Breast epithelium (tissue), 4 donors: ENCODE measurements at regions of chr17 and their contacts with region 1.

Region 1: GRCh38 chr17:19377602-19378392 is 501 bp upstream of the MAPK7 start:
- DNase-seq: peak; percentile 98
- H3K4me3 ChIP-seq: peak overlapping the region; percentile 79 to 96 (median 91)
- H3K27ac ChIP-seq: peak overlapping the region; percentile 96 to 97
- H3K4me1 ChIP-seq: peaks cover 7% of the 10 kb centered on the region in 2 donors
- H3K27me3 ChIP-seq: no peaks in the 10 kb centered on the region
- CTCF ChIP-seq: peak in 1 of 3 donors; percentile 32
- POLR2A ChIP-seq: peak; percentile 22

Region 2: DNA sequence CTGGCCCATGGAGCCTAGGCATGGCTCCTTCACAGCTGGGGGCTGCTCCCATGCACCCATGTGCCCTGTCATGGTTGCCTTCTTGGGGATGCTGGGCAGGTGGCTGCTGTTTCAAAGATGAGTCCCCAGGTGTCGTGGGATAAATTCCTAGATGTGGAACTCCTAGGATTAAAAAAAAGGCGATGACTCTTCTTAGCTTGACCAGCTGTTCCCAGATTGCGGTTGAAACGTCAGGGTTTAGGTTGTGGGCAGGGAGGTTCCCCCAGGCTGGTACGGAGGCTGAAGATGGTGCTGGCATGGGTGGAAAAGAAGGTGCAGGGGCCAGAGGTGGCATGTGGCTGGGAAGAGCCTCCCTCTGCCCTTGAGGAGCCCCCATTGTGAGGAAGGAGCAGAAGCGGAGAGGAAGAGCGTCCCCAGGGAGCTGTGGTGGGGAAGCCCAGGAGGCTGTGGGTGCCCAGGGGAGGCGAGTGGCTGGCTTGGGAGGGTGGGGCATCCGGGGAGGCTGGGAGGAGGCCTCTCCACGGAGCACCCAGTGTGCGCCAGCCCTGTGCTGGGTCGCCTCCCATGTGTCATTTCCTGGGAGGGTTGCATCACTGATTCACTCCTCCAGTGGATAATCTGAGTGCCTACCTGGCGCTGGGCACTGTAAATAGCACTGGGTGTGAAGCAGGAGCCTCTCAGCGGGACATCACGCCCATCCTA is 1990.9 kb after region 1 on chr17:
- intact Hi-C with region 1: loop called (anchors 10 kb)
- DNase-seq: no peak
- H3K4me3 ChIP-seq: no peak overlapping the region
- H3K27ac ChIP-seq: no peak overlapping the region
- H3K4me1 ChIP-seq: no peaks in the 10 kb centered on the region
- H3K27me3 ChIP-seq: no peaks in the 10 kb centered on the region
- CTCF ChIP-seq: no peak
- POLR2A ChIP-seq: no peak